ENCODE measurements at regions of chr4 and their contacts with region 1.

Region 1: DNA sequence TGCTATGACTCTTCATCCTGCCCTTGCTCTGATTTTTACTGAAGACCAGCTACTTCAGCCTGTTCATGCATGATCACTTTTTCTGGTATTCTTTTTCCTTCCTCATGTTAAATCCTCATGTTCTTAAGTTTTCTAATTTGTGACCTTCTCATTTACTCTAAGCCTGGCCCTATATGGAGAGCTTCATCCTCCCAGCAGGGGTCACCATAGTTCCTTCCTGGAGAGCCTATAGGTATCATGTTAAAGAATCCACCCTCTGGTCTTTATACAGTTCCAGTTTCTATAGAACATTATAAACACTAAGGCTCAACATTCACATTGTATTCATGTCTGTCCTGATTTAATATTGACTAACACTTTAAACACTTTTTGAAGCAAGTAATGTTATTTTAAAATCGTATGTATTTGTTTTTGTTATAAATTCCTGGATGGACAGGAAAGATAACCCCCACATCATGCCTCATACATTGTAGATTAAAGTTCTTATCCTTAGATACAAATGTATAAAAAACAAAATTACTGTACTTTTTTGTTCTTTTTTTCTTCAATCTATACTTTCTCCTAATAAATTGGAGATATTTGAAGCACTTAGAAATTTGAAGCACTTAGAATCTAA is 53.8 kb upstream of the OTUD4 start:
- DNase-seq: peak; percentile 52 to 67
- H3K4me3 ChIP-seq: no peak overlapping the region
- H3K4me3 Mint-ChIP-seq: no peak overlapping the region
- H3K27ac Mint-ChIP-seq: no peak overlapping the region
- H3K4me1 ChIP-seq: no peaks in the 10 kb centered on the region
- H3K4me1 Mint-ChIP-seq: no peaks in the 10 kb centered on the region
- H3K27me3 ChIP-seq: no peaks in the 10 kb centered on the region
- H3K27me3 Mint-ChIP-seq: peaks cover 6% of the 10 kb centered on the region
- CTCF ChIP-seq: peak; percentile 73 to 82

Region 2: DNA sequence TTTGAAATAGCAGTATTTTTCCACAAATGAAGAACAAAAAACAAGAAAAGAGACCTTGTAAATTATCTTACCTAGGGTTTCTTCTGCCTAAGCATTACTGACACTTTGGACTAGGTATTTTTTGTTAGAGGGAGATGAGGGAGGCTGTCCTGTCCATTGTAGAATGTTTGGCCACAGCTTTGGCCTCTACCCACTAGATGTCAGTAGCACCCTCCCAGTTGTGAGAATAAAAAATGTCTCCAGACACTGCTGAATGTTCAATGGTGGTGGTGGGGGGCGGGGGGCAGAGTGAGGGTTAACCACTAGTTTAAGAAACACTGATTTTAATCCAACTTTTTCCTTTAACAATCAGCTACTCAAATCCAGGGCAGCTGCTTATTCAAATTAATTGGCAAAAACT is 79.6 kb before region 1 on chr4:
- CTCF ChIA-PET with region 1: no interaction called
- POLR2A ChIA-PET with region 1: no interaction called
- intact Hi-C with region 1: loop called (anchors 5 kb)
- DNase-seq: peak in 1 of 2 experiments; percentile 33
- H3K4me3 ChIP-seq: no peak overlapping the region
- H3K4me3 Mint-ChIP-seq: no peak overlapping the region
- H3K27ac Mint-ChIP-seq: no peak overlapping the region
- H3K4me1 ChIP-seq: no peaks in the 10 kb centered on the region
- H3K4me1 Mint-ChIP-seq: no peaks in the 10 kb centered on the region
- H3K27me3 ChIP-seq: no peaks in the 10 kb centered on the region
- H3K27me3 Mint-ChIP-seq: no peaks in the 10 kb centered on the region
- CTCF ChIP-seq: peak; percentile 25 to 65

Region 3: GRCh38 chr4:145481164-145481941 is 247.2 kb after region 1 on chr4 and contains the start of gene SMAD1:
- CTCF ChIA-PET with region 1: no interaction called
- POLR2A ChIA-PET with region 1: no interaction called
- intact Hi-C with region 1: loop called (anchors 2 kb)
- DNase-seq: peak; percentile 68 to 71
- H3K4me3 ChIP-seq: peak within 1 kb of the TSS; percentile 58
- H3K4me3 Mint-ChIP-seq: no peak within 1 kb of the TSS
- H3K27ac Mint-ChIP-seq: peak within 1 kb of the TSS; percentile 57
- H3K4me1 ChIP-seq: no peaks in the 10 kb centered on the region
- H3K4me1 Mint-ChIP-seq: peaks cover 8% of the 10 kb centered on the region
- H3K27me3 ChIP-seq: no peaks in the 10 kb centered on the region
- H3K27me3 Mint-ChIP-seq: peaks cover 5% of the 10 kb centered on the region
- CTCF ChIP-seq: no peak
- total RNA-seq, gene SMAD1: 4.9 and 5.3 TPM in 2 replicates

Region 4: GRCh38 chr4:145609481-145610427 is 375.6 kb after region 1 on chr4:
- CTCF ChIA-PET with region 1: interaction called, 5 read pairs
- POLR2A ChIA-PET with region 1: no interaction called
- intact Hi-C with region 1: loop called (anchors 1 kb)
- DNase-seq: peak; percentile 50 to 65
- H3K4me3 ChIP-seq: no peak overlapping the region
- H3K4me3 Mint-ChIP-seq: no peak overlapping the region
- H3K27ac Mint-ChIP-seq: no peak overlapping the region
- H3K4me1 ChIP-seq: no peaks in the 10 kb centered on the region
- H3K4me1 Mint-ChIP-seq: no peaks in the 10 kb centered on the region
- H3K27me3 ChIP-seq: no peaks in the 10 kb centered on the region
- H3K27me3 Mint-ChIP-seq: peaks cover 5% of the 10 kb centered on the region
- CTCF ChIP-seq: peak in 1 of 2 experiments; percentile 61

Measured in Caco-2 (cell line).